ENCODE measurements at regions of chr5 and their contacts with region 1.

Region 1: DNA sequence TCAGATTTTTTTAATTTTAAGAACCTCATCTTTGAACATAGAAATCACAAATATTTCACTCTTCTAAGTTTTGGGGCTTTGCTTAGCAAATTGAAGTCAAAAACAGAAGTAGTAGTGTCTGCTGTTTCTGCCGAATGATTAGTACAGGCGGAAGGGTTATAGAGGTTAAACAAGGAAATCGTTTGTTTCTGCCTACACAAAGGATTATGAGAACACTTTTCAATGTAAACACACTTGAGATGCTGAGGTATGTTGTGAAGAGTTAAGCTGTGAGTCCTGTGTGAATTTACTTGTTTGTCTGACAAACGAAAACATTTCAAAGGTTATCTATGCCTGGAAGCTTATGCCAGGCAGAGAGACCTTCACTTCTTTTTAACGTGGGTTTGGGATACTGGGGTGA is 224.8 kb downstream of the CETN3 start:
- DNase-seq: no peak
- H3K4me3 ChIP-seq: no peak overlapping the region
- H3K27ac ChIP-seq: no peak overlapping the region
- H3K4me1 ChIP-seq: no peaks in the 10 kb centered on the region
- H3K27me3 ChIP-seq: peaks cover 0 to 1% (median 0%) of the 10 kb centered on the region in 4 experiments; a peak in 1 of 7 replicates
- CTCF ChIP-seq: no peak
- EP300 ChIP-seq: no peak
- POLR2A ChIP-seq: no peak
- RAD21 ChIP-seq: no peak

Region 2: DNA sequence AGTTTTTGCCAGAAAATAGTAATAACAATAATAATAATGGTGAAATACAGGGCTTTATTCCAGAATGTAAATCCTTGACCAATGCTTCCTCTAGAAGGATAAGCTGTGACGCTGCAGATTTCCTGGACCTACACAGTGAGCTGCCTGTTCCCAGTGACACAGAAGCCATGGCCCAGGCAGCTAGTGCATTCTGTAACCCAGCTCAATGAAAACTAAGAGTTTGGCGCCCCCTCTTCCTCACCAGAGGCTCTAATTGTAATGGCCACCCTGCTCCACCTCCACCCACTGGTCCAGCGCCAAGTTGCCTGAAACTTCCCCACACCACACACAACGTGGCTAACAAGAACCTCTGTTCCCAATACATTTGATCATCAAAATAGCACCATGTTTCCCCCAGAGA is 23.4 kb before region 1 on chr5:
- CTCF ChIA-PET with region 1: interaction called, 11 read pairs
- POLR2A ChIA-PET with region 1: no interaction called
- DNase-seq: peak; percentile 31 to 52
- H3K4me3 ChIP-seq: no peak overlapping the region
- H3K27ac ChIP-seq: no peak overlapping the region
- H3K4me1 ChIP-seq: peaks cover 0 to 5% (median 2%) of the 10 kb centered on the region in 4 experiments; a peak in 3 of 7 replicates
- H3K27me3 ChIP-seq: 0 out of 7 replicates have a peak, but pooled peaks cover 0 to 2% (median 0%) of the 10 kb centered on the region in 4 experiments
- CTCF ChIP-seq: peak; percentile 51 to 76 (median 71)
- EP300 ChIP-seq: no peak
- POLR2A ChIP-seq: no peak
- RAD21 ChIP-seq: peak; percentile 81 to 88

Measured in H1 (cell line).